Naive thymus-derived CD4-positive, alpha-beta T cell (primary cell): ENCODE measurements at regions of chr19 and their contacts with region 1.

Region 1: GRCh38 chr19:55599468-55600279 is at the start of gene FIZ1:
- DNase-seq: peak; percentile 88 to 97 (median 95)
- ATAC-seq: peak; percentile 84
- H3K4me3 ChIP-seq: peak within 1 kb of the TSS; percentile 93
- H3K4me3 Mint-ChIP-seq: peak within 1 kb of the TSS; percentile 90 to 100 (median 99)
- H3K27ac ChIP-seq: peak within 1 kb of the TSS; percentile 93
- H3K27ac Mint-ChIP-seq: peak within 1 kb of the TSS; percentile 97 to 100 (median 99)
- H3K4me1 ChIP-seq: peaks cover 0 to 15% of the 10 kb centered on the region in 2 donors
- H3K4me1 Mint-ChIP-seq: peaks cover 20 to 36% (median 30%) of the 10 kb centered on the region in 7 donors
- H3K27me3 ChIP-seq: no peaks in the 10 kb centered on the region
- H3K27me3 Mint-ChIP-seq: no peaks in the 10 kb centered on the region
- total RNA-seq, gene FIZ1: 9.4 to 32.0 (median 16.1) TPM

Region 2: DNA sequence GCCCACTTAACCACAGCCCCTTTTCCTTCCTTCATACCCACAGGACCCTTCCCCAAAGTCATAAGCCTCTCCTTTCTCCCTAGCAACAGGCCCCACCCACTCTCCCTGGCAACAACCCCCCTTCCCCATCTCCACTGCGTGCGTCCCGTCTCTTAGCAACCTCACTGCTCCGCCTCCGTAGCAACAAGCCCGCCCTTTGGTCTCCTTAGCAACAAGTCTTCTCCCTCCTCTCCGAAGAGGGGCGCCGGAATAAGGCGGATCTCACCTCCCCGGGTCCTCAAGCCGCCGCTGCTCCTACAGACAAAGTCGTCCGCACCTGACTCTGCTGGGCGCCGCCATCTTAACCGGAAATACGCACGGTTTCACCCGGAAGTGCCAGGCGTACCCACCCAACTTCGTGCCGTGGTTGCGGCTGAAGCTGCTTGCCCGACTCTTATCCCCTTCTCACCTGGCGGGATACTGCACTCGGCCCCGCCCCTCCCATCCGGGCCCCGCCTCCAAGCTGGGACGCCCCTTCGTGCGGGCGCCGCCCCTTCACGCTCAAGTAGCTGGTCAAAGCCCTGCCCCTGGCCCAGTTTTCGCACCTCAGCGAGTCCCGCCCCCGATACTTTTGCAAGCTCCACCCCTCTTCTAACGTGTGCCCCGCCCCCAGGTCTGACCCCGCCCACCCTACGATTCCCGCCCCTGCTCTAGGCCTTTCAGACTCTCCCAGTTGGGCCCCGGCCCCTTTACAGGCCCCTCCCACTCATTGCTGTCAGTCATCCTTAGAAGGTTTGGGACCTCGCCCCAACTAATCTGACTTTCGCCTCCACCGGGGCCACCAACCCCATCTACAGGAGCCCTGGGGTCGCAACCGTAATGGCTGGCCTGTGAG is 319.7 kb before region 1 on chr19 and contains the start of gene HSPBP1:
- CTCF ChIA-PET with region 1: no interaction called
- POLR2A ChIA-PET with region 1: no interaction called
- intact Hi-C with region 1: loop called in 1 of 2 experiments (anchors 1 kb)
- DNase-seq: peak; percentile 88 to 96 (median 96)
- ATAC-seq: peak; percentile 92
- H3K4me3 ChIP-seq: peak within 1 kb of the TSS; percentile 91
- H3K4me3 Mint-ChIP-seq: peak within 1 kb of the TSS; percentile 92 to 100 (median 98)
- H3K27ac ChIP-seq: peak within 1 kb of the TSS; percentile 89
- H3K27ac Mint-ChIP-seq: peak within 1 kb of the TSS; percentile 91 to 100 (median 98)
- H3K4me1 ChIP-seq: peaks cover 6 to 32% of the 10 kb centered on the region in 2 donors
- H3K4me1 Mint-ChIP-seq: peaks cover 12 to 52% (median 39%) of the 10 kb centered on the region in 7 donors
- H3K27me3 ChIP-seq: no peaks in the 10 kb centered on the region
- H3K27me3 Mint-ChIP-seq: peaks cover 0 to 9% (median 0%) of the 10 kb centered on the region in 5 donors
- total RNA-seq, gene HSPBP1: 15.0 to 30.0 (median 16.0) TPM

Region 3: DNA sequence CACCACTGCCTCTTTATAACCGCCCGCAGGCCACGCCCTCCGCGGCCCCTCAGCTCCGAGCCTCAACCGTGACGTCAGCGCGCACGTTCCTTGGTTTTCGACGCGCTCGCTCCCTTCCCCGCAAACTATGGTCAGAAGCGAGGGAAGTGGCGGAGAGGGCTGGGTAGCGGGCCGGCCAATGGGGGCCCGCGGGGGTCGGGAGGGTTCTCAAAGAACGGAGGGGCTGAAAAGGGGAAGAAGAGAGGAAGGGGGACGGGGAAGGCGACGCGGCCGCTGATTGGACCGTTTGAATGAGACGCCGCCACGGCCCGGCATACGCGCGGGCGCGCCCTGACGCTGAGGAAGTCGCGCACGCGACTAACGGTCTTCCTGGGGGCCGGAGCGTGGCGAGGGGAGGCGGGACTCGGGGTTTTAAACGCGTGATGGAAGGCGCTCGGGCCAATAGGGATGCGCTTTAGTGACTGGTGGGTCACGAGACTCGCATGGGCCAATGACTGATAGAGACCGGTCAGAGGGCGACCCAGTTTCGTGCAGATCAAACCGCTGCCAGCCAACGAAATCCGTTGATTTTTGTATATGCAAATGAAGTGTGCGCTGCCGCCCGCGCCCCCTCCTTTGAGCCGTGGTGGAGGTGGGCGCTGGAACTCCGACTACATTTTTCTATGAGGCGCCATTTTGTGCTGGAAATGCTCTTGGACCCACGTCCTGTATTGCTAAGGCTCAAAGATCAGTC is 191.7 kb before region 1 on chr19:
- CTCF ChIA-PET with region 1: no interaction called
- POLR2A ChIA-PET with region 1: interaction called, 9 read pairs
- intact Hi-C with region 1: loop called in 1 of 2 experiments (anchors 1 kb)
- DNase-seq: peak; percentile 94 to 99 (median 97)
- ATAC-seq: peak; percentile 93
- H3K4me3 ChIP-seq: peak overlapping the region; percentile 89
- H3K4me3 Mint-ChIP-seq: peak overlapping the region; percentile 86 to 97 (median 92)
- H3K27ac ChIP-seq: peak overlapping the region; percentile 96
- H3K27ac Mint-ChIP-seq: peak overlapping the region; percentile 93 to 100 (median 99)
- H3K4me1 ChIP-seq: peaks cover 17 to 24% of the 10 kb centered on the region in 2 donors
- H3K4me1 Mint-ChIP-seq: peaks cover 21 to 36% (median 26%) of the 10 kb centered on the region in 7 donors
- H3K27me3 ChIP-seq: no peaks in the 10 kb centered on the region
- H3K27me3 Mint-ChIP-seq: peaks cover 0 to 12% (median 0%) of the 10 kb centered on the region in 5 donors

Region 4: GRCh38 chr19:55580628-55581144 is 19.0 kb before region 1 on chr19 and contains the start of gene ZNF579:
- CTCF ChIA-PET with region 1: no interaction called
- POLR2A ChIA-PET with region 1: interaction called, 44 read pairs
- intact Hi-C with region 1: loop called (anchors 1 kb)
- DNase-seq: peak in 8 of 9 donors; percentile 50 to 82 (median 64)
- ATAC-seq: peak; percentile 86
- H3K4me3 ChIP-seq: peak within 1 kb of the TSS; percentile 82
- H3K4me3 Mint-ChIP-seq: peak within 1 kb of the TSS; percentile 85 to 92 (median 88)
- H3K27ac ChIP-seq: peak within 1 kb of the TSS; percentile 87
- H3K27ac Mint-ChIP-seq: peak within 1 kb of the TSS; percentile 76 to 96 (median 88)
- H3K4me1 ChIP-seq: peaks cover 8 to 16% of the 10 kb centered on the region in 2 donors
- H3K4me1 Mint-ChIP-seq: peaks cover 21 to 35% (median 29%) of the 10 kb centered on the region in 7 donors
- H3K27me3 ChIP-seq: no peaks in the 10 kb centered on the region
- H3K27me3 Mint-ChIP-seq: peaks cover 0 to 16% (median 0%) of the 10 kb centered on the region in 5 donors
- total RNA-seq, gene ZNF579: 6.1 to 11.0 (median 7.8) TPM

Region 5: DNA sequence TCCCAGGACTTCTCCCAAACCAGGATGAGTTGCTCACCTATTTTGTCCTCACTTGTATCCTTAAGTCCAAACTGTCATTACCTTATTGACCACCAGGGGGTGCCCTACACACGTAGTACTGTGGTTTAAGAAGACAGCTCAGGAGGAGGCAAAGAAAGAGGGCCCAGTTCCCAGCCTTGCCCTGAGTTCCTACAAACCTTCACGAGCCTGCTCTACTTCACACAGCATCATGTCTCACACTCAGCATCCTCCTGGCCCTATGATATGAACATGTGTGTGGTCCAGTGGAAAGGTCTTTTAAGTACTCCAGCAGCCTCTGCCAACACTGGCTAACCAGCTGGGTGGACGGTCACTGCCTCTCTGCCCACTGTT is 32.8 kb after region 1 on chr19:
- CTCF ChIA-PET with region 1: interaction called, 42 read pairs
- POLR2A ChIA-PET with region 1: interaction called, 76 read pairs
- intact Hi-C with region 1: loop called in 1 of 2 experiments (anchors 1 kb)
- DNase-seq: peak in 8 of 9 donors; percentile 81 to 93 (median 88)
- ATAC-seq: peak; percentile 76
- H3K4me3 ChIP-seq: no peak overlapping the region
- H3K4me3 Mint-ChIP-seq: peak overlapping the region; percentile 2 to 82 (median 34)
- H3K27ac ChIP-seq: peak overlapping the region; percentile 16
- H3K27ac Mint-ChIP-seq: peak overlapping the region; percentile 17 to 95 (median 71)
- H3K4me1 ChIP-seq: peaks cover 23 to 28% of the 10 kb centered on the region in 2 donors
- H3K4me1 Mint-ChIP-seq: peaks cover 39 to 54% (median 46%) of the 10 kb centered on the region in 7 donors
- H3K27me3 ChIP-seq: no peaks in the 10 kb centered on the region
- H3K27me3 Mint-ChIP-seq: peaks cover 0 to 12% (median 0%) of the 10 kb centered on the region in 5 donors

Region 6: DNA sequence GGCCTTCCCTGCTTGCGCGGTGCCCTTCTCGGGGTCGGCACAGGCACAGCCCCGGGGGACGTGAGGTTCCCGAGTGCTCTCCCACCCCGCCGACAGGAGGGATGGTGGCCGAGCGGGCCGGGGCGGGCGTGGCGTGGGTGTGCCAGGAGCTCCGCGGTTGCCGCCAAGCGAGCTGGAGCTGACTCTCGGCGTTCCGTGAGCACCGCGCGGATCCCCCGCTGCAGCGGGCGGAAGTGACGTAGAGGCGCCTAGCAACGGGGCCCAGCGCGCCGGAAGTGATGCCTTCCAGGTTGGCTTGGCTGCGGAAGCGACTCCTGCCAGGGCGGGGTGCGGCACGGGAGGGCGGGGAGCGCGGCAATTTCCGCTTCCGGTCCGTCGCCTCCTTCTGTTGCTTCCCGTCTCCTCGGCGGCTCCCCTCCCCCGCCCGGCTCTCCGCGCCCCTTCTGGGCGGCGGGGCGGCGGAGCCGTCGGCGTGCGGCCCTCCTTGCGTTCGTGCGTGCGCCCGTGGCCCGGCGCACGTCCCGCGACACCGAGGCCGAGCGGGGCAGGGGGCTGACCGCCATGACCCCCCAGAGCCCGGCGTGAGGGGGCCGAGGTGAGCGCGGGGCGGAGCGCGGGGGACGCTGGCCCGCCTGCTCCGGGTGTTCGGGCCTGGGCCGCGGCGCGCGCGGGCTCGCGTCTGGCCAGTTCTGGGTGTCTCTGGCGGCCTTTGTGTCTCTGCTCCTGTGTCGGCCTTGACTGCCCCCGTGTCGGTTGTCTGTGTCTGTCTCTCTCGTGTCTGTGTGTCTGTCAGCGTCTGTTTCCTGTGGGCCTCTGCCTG is 75.4 kb after region 1 on chr19 and contains the start of gene EPN1:
- CTCF ChIA-PET with region 1: no interaction called
- POLR2A ChIA-PET with region 1: no interaction called
- intact Hi-C with region 1: loop called (anchors 1 kb)
- DNase-seq: peak; percentile 88 to 98 (median 96)
- ATAC-seq: peak; percentile 93
- H3K4me3 ChIP-seq: peak within 1 kb of the TSS; percentile 72
- H3K4me3 Mint-ChIP-seq: peak within 1 kb of the TSS; percentile 89 to 99 (median 97)
- H3K27ac ChIP-seq: peak within 1 kb of the TSS; percentile 84
- H3K27ac Mint-ChIP-seq: peak within 1 kb of the TSS; percentile 90 to 99 (median 96)
- H3K4me1 ChIP-seq: peaks cover 26 to 28% of the 10 kb centered on the region in 2 donors
- H3K4me1 Mint-ChIP-seq: peaks cover 49 to 72% (median 58%) of the 10 kb centered on the region in 7 donors
- H3K27me3 ChIP-seq: no peaks in the 10 kb centered on the region
- H3K27me3 Mint-ChIP-seq: no peaks in the 10 kb centered on the region
- total RNA-seq, gene EPN1: 45.2 to 67.1 (median 52.2) TPM

Region 7: DNA sequence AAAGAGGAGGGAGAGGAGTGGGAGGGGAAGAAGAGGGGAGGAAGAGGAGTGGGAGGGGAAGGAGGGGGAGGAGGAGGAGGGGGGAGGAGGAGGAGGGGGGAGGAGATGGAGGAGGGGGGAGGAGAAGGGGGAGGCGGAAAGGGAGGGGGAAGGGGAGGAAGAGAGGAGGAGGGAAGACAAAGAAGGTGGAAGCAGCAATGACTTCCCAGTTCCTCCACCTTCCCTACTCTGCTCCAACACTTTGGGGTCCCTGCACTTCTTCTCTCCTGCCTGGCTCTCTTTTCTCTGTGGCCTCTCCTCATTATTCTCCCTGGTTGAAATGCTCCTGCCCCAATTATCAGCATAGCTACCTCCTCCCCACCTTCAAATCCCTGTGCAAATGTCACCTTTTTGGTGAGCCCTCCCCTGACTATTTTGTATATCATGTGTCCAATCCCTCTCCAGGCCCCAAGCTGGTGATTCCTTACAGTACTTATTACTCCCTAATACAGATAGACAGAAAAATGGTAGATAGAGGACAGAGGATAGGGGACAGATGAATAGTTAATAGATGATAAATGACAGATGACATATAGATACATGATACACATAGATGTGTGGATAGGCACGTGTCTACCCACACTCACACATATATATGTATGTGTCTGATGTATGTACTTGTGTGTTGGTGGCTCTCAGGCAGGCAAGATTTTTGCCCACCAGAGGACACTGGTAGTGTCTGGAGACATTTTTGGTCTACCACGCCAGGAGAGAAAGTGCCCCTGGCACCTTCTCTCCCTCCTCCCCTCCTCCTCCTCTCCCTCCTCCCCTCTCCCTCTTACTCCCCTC is 113.3 kb after region 1 on chr19:
- CTCF ChIA-PET with region 1: no interaction called
- POLR2A ChIA-PET with region 1: no interaction called
- intact Hi-C with region 1: no loop called
- DNase-seq: no peak
- ATAC-seq: no peak
- H3K4me3 ChIP-seq: no peak overlapping the region
- H3K4me3 Mint-ChIP-seq: peak overlapping the region in 3 of 10 donors; percentile 6 to 30 (median 21)
- H3K27ac ChIP-seq: no peak overlapping the region
- H3K27ac Mint-ChIP-seq: peak overlapping the region in 3 of 9 donors; percentile 13 to 77 (median 66)
- H3K4me1 ChIP-seq: no peaks in the 10 kb centered on the region
- H3K4me1 Mint-ChIP-seq: peaks cover 0 to 9% (median 5%) of the 10 kb centered on the region in 7 donors
- H3K27me3 ChIP-seq: no peaks in the 10 kb centered on the region
- H3K27me3 Mint-ChIP-seq: peaks cover 0 to 28% (median 16%) of the 10 kb centered on the region in 5 donors